ENCODE measurements at regions of chr13 and their contacts with region 1.

Region 1: DNA sequence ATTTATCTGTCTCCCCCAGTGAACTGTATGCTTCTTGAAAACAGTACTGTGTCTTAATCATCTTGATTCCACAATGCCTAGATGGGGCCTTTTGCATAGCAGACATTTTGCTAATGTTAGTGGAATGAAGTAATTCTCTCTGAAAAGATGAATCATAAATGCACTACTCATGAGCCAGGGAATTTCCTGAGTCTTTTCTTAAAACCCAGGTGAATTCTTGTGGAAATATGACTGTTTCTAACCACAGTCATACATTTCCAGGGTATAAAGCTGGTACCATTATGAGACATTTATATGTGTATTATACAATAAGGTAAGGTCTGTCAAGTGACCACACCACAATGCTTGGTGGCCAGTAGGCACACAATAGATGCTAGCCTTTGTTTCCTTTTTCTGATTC is 5.5 kb upstream of the KCTD4 start:
- DNase-seq: peak; percentile 20
- CTCF ChIP-seq: no peak

Region 2: DNA sequence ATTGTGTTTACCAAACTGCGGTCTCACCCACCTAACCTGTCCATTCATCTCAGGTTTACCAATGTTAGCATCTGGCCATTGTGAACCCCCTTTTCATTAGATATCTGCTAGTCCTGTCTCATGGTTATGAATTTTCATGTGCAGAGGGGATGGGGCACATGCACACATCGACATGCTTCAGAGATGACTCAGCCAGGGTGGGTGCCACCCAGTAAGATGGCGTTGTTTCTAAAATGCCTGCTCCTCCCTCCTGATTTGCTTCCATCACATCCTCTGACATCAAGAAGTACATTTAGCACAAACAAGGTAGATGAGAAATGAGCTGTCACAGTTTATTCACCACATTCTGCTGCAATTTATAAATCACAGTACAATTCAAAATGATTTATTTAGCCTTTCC is 165.7 kb before region 1 on chr13:
- CTCF ChIA-PET with region 1: no interaction called
- POLR2A ChIA-PET with region 1: no interaction called
- DNase-seq: no peak
- CTCF ChIP-seq: no peak

Region 3: GRCh38 chr13:45194081-45194939 is 12.0 kb before region 1 on chr13:
- CTCF ChIA-PET with region 1: interaction called, 31 read pairs
- POLR2A ChIA-PET with region 1: no interaction called
- DNase-seq: no peak
- CTCF ChIP-seq: no peak

Region 4: DNA sequence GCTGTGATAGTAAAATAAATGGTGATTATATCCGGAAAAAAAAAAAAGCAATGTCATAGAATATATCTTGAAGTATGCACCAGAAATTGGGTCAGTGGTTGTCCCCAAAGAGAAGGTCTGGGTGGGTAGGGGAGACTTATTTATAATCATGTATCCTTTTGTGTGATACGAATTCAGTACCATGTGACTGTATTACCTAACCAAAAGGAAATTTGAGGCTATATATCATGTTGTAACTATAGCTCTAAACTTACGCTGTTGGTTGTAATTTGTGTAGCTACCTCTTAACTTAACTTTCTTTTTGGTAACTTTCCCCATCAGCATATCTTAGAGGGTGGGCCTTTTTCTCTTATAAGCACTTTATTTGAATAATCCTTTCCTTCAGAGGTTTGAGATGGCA is 19.7 kb after region 1 on chr13:
- CTCF ChIA-PET with region 1: interaction called, 11 read pairs
- POLR2A ChIA-PET with region 1: no interaction called
- DNase-seq: no peak
- CTCF ChIP-seq: no peak

Measured in GM10248 (cell line).